ENCODE measurements at regions of chr10 and their contacts with region 1.

Region 1: DNA sequence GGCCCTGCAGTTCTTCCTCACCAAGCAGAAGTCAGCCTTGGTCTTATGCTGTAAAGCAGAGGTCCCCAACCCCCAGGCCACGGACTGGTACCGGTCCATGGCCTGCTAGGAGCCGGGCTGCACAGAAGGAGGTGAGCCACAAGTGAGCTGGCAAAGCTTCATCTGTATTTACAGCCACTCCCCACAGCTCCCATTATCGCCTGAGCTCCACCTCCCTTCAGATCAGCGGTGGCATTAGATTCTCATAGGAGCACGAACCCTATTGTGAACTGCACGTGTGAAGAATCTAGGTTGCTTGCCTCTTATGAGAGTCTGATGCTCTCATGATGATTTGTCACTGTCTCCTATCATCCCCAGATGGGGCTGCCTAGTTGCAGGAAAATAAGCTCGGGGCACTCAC is 87.6 kb upstream of the NEBL start:
- DNase-seq: no peak
- H3K4me3 ChIP-seq: no peak overlapping the region
- CTCF ChIP-seq: no peak
- POLR2A ChIP-seq: no peak

Region 2: DNA sequence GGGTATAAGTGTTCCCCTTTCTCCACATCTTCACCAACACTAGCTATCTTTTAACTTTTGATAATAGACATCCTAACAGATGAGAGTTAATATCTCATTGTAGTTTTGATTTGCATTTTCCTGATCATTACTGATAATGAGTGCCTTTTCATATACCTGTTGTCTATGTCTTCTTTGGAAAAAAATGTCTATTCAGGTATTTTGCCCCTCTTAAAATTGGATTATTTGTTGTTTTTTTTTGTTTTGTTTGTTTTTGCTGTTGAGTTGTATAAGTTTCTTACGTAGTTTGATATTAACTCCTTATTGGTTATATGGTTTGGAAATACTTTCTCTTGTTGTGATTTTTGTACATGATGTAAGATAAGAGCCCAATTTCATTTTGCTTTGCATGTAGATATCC is 1721.4 kb before region 1 on chr10:
- intact Hi-C with region 1: loop called (anchors 5 kb)
- DNase-seq: no peak
- H3K4me3 ChIP-seq: no peak overlapping the region
- CTCF ChIP-seq: no peak
- POLR2A ChIP-seq: no peak

Region 3: DNA sequence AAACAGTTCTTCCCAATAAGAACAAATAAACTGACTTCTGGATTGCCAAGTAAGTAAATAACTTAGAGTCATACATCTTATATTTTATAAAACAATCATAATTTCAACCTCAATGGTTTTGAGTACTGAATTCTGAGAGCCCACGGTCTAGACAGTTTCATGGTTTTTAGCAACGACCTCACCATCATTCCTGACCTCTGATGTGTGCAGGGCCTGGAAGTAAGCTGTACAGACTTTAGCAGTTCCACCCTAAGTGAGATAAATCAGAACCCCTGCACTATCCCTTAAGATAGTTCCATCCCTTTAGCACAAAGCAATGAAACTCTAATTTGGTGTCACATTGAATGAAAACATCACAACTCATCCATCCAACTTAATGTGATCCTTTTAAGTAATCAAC is 173.5 kb before region 1 on chr10:
- intact Hi-C with region 1: no loop called
- DNase-seq: no peak
- H3K4me3 ChIP-seq: no peak overlapping the region
- CTCF ChIP-seq: no peak
- POLR2A ChIP-seq: no peak

Measured in lower leg skin (tissue), 4 donors.